ENCODE measurements at regions of chr19 and their contacts with region 1.

Region 1: GRCh38 chr19:2151339-2152229 is at the start of gene AP3D1:
- DNase-seq: peak; percentile 100
- H3K4me3 Mint-ChIP-seq: peak within 1 kb of the TSS; percentile 85
- H3K27ac Mint-ChIP-seq: peak within 1 kb of the TSS; percentile 86
- H3K4me1 Mint-ChIP-seq: peaks cover 28% of the 10 kb centered on the region
- H3K27me3 Mint-ChIP-seq: no peaks in the 10 kb centered on the region
- total RNA-seq, gene AP3D1: 101 and 103 TPM in 2 replicates

Region 2: GRCh38 chr19:2016041-2016807 is 135.4 kb before region 1 on chr19:
- intact Hi-C with region 1: loop called (anchors 10 kb)
- DNase-seq: peak; percentile 58
- H3K4me3 Mint-ChIP-seq: peak overlapping the region; percentile 78
- H3K27ac Mint-ChIP-seq: peak overlapping the region; percentile 17
- H3K4me1 Mint-ChIP-seq: peaks cover 8% of the 10 kb centered on the region
- H3K27me3 Mint-ChIP-seq: no peaks in the 10 kb centered on the region

Region 3: DNA sequence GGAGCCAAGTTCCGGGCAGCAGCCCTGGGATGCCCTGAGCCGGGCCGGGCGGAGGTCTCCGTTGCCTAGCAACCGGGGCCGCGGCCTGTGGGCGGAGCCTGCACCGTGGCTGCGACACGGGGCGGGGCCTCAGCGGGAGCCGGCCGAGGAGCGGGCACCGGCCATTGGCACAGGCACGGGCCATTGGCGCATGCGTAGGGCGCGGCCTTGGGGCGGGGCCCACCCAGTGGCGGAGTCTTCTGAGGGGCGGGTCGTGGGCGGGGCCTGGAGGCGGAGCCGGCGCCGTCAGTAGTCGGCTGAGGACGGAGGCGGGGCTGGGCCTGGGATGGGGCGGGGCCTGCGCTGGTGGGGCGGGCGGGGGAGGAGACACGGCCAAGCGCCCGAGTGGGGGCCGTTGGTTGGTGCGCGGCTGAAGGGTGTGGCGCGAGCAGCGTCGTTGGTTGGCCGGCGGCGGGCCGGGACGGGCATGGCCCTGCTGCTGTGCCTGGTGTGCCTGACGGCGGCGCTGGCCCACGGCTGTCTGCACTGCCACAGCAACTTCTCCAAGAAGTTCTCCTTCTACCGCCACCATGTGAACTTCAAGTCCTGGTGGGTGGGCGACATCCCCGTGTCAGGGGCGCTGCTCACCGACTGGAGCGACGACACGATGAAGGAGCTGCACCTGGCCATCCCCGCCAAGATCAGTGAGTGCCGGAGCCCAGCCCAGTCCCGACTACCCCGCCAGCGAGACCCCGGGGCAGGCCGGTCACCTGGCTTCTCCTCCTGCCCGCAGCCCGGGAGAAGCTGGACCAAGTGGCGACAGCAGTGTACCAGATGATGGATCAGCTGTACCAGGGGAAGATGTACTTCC is 54.9 kb before region 1 on chr19 and contains the start of gene IZUMO4:
- intact Hi-C with region 1: loop called (anchors 2 kb)
- DNase-seq: peak; percentile 98
- H3K4me3 Mint-ChIP-seq: peak within 1 kb of the TSS; percentile 97
- H3K27ac Mint-ChIP-seq: peak within 1 kb of the TSS; percentile 84
- H3K4me1 Mint-ChIP-seq: peaks cover 15% of the 10 kb centered on the region
- H3K27me3 Mint-ChIP-seq: no peaks in the 10 kb centered on the region
- total RNA-seq, gene IZUMO4: 7.6 and 9.5 TPM in 2 replicates

Region 4: DNA sequence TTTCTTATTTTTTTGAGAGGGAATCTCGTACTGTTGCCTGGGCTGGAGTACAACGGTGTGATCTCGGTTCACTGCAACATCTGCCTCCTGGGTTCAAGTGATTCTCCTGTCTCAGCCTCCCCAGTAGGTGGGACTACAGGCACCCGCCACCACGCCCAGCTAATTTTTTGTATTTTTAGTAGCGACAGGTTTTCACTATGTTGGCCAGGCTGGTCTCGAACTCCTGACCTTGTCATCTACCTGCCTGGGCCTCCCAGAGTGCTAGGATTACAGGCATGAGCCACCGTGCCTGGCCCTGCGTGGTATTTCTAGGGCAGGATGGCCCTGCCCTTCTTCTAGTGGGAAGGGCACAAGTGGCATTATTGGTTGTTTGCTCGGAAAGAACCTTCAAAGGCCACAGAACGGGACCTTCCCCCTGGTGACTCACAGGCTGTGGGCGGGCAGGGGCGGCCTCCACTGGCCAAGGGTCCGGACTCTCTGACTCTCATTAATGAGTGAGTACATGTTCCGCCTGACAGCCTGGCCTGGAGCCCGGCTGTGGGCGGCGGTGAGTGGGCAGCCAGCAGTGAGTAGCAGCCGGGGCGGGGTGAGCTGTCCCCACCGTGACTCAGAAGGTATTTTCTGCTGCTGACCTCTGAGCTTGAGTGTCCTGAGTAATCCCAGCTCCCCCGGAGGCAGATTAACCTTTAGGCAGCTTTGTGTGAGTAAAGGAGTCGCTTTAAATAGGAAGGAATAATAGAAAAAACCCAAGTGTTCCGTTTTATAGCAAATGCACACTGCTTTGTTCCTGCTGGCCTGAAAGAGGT is 17.2 kb after region 1 on chr19:
- intact Hi-C with region 1: loop called (anchors 1 kb)
- DNase-seq: peak; percentile 33
- H3K4me3 Mint-ChIP-seq: peak overlapping the region; percentile 77
- H3K27ac Mint-ChIP-seq: peak overlapping the region; percentile 95
- H3K4me1 Mint-ChIP-seq: peaks cover 52% of the 10 kb centered on the region
- H3K27me3 Mint-ChIP-seq: no peaks in the 10 kb centered on the region

Region 5: GRCh38 chr19:2236314-2237050 is 84.9 kb after region 1 on chr19 and contains the starts of genes PLEKHJ1 and SF3A2:
- intact Hi-C with region 1: loop called (anchors 1 kb)
- DNase-seq: peak; percentile 97
- H3K4me3 Mint-ChIP-seq: peak within 1 kb of the TSS; percentile 99
- H3K27ac Mint-ChIP-seq: peak within 1 kb of the TSS; percentile 99
- H3K4me1 Mint-ChIP-seq: peaks cover 43% of the 10 kb centered on the region
- H3K27me3 Mint-ChIP-seq: no peaks in the 10 kb centered on the region
- total RNA-seq, gene PLEKHJ1: 75.7 and 77.2 TPM in 2 replicates
- total RNA-seq, gene SF3A2: 153 and 154 TPM in 2 replicates

Region 6: GRCh38 chr19:2269244-2269947 is 117.8 kb after region 1 on chr19:
- intact Hi-C with region 1: loop called (anchors 5 kb)
- DNase-seq: peak; percentile 99
- H3K4me3 Mint-ChIP-seq: peak overlapping the region; percentile 89
- H3K27ac Mint-ChIP-seq: peak overlapping the region; percentile 86
- H3K4me1 Mint-ChIP-seq: peaks cover 26% of the 10 kb centered on the region
- H3K27me3 Mint-ChIP-seq: no peaks in the 10 kb centered on the region

Region 7: GRCh38 chr19:2289714-2290435 is 138.3 kb after region 1 on chr19:
- intact Hi-C with region 1: no loop called
- DNase-seq: peak; percentile 75
- H3K4me3 Mint-ChIP-seq: peak overlapping the region; percentile 85
- H3K27ac Mint-ChIP-seq: peak overlapping the region; percentile 80
- H3K4me1 Mint-ChIP-seq: peaks cover 17% of the 10 kb centered on the region
- H3K27me3 Mint-ChIP-seq: peaks cover 2% of the 10 kb centered on the region

Region 8: GRCh38 chr19:2328401-2329148 is 177.0 kb after region 1 on chr19 and contains the starts of genes LSM7 and SPPL2B:
- intact Hi-C with region 1: no loop called
- DNase-seq: peak; percentile 90
- H3K4me3 Mint-ChIP-seq: peak within 1 kb of the TSS; percentile 100
- H3K27ac Mint-ChIP-seq: peak within 1 kb of the TSS; percentile 100
- H3K4me1 Mint-ChIP-seq: peaks cover 44% of the 10 kb centered on the region
- H3K27me3 Mint-ChIP-seq: no peaks in the 10 kb centered on the region
- total RNA-seq, gene LSM7: 142 and 171 TPM in 2 replicates
- total RNA-seq, gene SPPL2B: 60.8 and 69.5 TPM in 2 replicates

Region 9: DNA sequence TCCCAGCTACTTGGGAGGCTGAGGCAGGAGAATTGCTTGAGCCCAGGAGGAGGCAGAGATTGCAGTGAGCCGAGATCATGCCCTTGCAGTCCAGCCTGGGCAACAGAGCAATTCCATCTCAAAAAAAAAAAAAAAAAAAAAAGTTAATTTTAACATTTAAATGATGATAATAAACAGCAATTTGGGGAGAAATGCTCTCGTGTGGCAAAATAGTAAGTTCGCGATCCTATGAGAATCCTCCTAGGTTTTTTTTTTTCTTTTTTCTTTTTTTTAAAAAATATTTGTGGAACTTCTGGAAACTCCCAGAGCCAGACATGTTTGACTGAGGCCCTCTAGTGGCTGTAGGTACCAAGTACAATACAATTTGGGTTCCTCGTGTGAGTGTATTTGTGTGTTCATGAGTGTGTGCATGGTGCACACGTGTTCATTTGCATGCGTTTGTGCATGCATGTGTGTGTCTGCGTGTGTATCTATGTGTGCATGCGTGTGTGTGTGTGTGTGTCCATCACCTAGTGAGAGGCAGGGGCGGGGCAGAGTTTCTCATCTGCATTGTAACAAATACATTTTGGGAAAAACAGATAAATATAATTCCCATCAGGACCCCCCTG is 239.6 kb after region 1 on chr19:
- intact Hi-C with region 1: loop called (anchors 5 kb)
- DNase-seq: peak; percentile 20
- H3K4me3 Mint-ChIP-seq: no peak overlapping the region
- H3K27ac Mint-ChIP-seq: no peak overlapping the region
- H3K4me1 Mint-ChIP-seq: peaks cover 7% of the 10 kb centered on the region
- H3K27me3 Mint-ChIP-seq: peaks cover 4% of the 10 kb centered on the region

Measured in activated T-helper 2 cell treated with anti-CD3 and anti-CD28 coated beads, Interferon-gamma antibody, Interleukin-2, Interleukin-4, amounts not matched to agents 10 μg/mL and 5 μg/mL and 100 μg/mL, durations not matched to agents 14 hours and 24 hours and 36 hours (primary cell).